ENCODE measurements at regions of chr1 and their contacts with region 1.

Region 1: DNA sequence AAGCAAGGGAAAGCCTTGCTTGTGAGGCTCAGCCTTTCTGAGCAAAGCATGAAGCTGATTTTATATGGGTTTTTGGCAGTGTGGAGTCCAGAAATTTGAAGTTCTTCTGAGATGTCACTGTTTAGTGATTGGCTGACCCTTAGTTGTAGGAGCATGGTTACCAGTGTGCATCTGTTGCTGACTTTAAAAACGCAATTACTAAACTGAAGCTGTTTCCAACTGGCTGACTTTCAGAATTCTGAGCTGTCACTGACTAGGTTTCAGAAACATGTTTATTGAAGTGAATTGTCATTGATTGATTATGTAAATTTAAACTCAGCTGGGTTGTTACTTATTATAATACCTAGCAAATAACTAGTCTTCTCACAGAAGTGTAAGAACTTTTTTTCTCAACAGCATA is 89.4 kb downstream of the PDE4B start:
- DNase-seq: no peak
- H3K4me3 ChIP-seq: no peak overlapping the region
- H3K27ac ChIP-seq: no peak overlapping the region
- H3K4me1 ChIP-seq: no peaks in the 10 kb centered on the region
- H3K27me3 ChIP-seq: no peaks in the 10 kb centered on the region
- CTCF ChIP-seq: no peak

Region 2: DNA sequence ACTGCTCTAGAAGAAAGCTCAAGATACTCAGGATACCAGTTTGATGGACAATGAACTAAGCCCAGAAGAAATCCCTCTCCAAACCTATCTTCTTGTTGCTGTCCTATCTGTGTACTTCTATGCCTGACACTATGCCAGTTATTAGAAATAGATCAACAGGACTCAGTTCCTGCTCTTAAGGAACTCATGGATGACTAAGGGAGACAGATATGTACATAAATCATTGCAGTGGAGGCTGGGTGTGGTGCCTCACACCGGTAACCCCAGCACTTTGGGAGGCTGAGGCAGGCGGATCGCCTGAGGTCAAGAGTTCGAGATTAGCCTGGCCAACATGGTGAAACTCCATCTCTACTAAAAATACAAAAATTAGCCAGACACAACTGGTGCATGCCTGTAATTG is 776.5 kb before region 1 on chr1:
- CTCF ChIA-PET with region 1: interaction called, 22 read pairs
- dilution Hi-C with region 1: no loop called
- in situ Hi-C with region 1: no loop called
- intact Hi-C with region 1: no loop called
- DNase-seq: peak; percentile 5
- H3K4me3 ChIP-seq: no peak overlapping the region
- H3K27ac ChIP-seq: no peak overlapping the region
- H3K4me1 ChIP-seq: no peaks in the 10 kb centered on the region
- H3K27me3 ChIP-seq: no peaks in the 10 kb centered on the region
- CTCF ChIP-seq: no peak

Region 3: GRCh38 chr1:65332821-65333220 is 549.3 kb before region 1 on chr1:
- CTCF ChIA-PET with region 1: no interaction called
- dilution Hi-C with region 1: no loop called
- in situ Hi-C with region 1: no loop called
- intact Hi-C with region 1: no loop called
- DNase-seq: no peak
- H3K4me3 ChIP-seq: no peak overlapping the region
- H3K27ac ChIP-seq: no peak overlapping the region
- H3K4me1 ChIP-seq: no peaks in the 10 kb centered on the region
- H3K27me3 ChIP-seq: no peaks in the 10 kb centered on the region
- CTCF ChIP-seq: no peak

Region 4: GRCh38 chr1:65725064-65725463 is 157.0 kb before region 1 on chr1:
- CTCF ChIA-PET with region 1: no interaction called
- dilution Hi-C with region 1: no loop called
- in situ Hi-C with region 1: no loop called
- intact Hi-C with region 1: no loop called
- DNase-seq: no peak
- H3K4me3 ChIP-seq: no peak overlapping the region
- H3K27ac ChIP-seq: no peak overlapping the region
- H3K4me1 ChIP-seq: no peaks in the 10 kb centered on the region
- H3K27me3 ChIP-seq: no peaks in the 10 kb centered on the region
- CTCF ChIP-seq: no peak

Region 5: DNA sequence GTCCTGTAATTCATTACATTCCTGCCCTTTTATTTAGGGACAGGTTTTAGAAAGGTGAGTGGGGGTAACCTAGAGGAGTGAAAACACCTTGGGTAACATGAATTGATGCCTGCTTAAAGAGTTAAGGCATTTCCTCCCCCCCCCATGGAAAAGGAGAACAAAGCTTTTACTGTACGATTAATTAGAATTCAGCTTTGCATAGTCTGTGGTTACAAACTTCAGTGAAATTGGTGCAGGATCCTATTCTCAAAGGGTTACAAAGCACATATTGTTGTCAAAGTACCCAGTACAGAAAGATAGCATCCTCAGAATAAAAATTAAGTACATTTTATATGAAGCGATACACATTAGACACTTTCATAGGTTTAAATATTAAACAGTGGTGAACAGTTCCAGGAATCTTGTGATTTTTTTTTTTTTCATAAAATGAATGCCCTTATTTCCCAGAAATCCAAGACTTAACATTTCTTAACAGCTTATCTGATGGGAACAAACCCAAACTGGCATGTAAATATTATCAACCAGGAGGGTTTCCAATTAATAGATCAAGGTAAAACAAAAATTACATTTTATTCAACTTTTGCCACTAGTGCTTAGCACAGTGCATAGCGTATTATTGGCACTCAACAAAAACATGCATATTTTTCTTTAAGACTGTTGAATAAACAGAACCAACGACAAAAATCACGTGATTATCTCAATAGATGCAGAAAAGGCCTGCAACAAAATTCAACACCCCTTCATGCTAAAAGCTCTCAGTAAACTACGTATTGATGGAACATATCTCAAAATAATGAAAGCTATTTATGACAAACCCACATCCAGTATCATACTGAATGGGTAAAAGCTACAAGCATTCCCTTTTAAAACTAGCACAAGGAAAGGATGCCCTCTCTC is 83.3 kb after region 1 on chr1:
- CTCF ChIA-PET with region 1: no interaction called
- dilution Hi-C with region 1: no loop called
- in situ Hi-C with region 1: no loop called
- intact Hi-C with region 1: no loop called
- DNase-seq: no peak
- H3K4me3 ChIP-seq: no peak overlapping the region
- H3K27ac ChIP-seq: no peak overlapping the region
- H3K4me1 ChIP-seq: no peaks in the 10 kb centered on the region
- H3K27me3 ChIP-seq: no peaks in the 10 kb centered on the region
- CTCF ChIP-seq: no peak